ENCODE measurements at regions of chr10 and their contacts with region 1.

Region 1: GRCh38 chr10:118145256-118145655 is 98.5 kb upstream of the RAB11FIP2 start:
- DNase-seq: no peak
- H3K4me3 ChIP-seq: no peak overlapping the region
- H3K27ac ChIP-seq: no peak overlapping the region
- H3K4me1 ChIP-seq: no peaks in the 10 kb centered on the region
- H3K27me3 ChIP-seq: no peaks in the 10 kb centered on the region
- CTCF ChIP-seq: no peak

Region 2: DNA sequence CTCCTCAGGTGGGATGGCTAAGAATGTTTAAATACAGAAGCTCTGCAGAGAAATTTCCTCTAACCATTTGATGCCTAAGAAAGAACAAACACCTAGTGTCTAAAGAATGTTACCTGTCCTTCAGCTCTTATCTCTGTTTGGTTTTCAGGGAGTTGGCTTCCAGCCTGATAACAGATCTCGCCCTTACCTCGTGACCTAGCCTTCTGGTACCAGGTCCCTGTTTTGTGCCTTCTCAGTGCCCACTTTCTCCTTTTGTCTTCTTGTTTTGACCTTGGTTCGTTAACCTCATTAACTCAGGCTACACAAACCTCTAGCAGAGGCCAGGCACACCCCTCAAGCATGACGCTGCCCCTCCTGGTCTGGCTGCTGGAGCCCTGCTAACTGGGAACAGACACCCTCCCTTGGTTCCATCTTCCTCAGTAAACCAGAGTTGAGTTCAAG is 82.4 kb before region 1 on chr10:
- CTCF ChIA-PET with region 1: no interaction called
- POLR2A ChIA-PET with region 1: interaction called, 12 read pairs
- intact Hi-C with region 1: no loop called
- DNase-seq: no peak
- H3K4me3 ChIP-seq: no peak overlapping the region
- H3K27ac ChIP-seq: no peak overlapping the region
- H3K4me1 ChIP-seq: no peaks in the 10 kb centered on the region
- H3K27me3 ChIP-seq: no peaks in the 10 kb centered on the region
- CTCF ChIP-seq: no peak

Measured in PC-9 (cell line).